Mammary epithelial cell (primary cell): ENCODE measurements at regions of chr9 and their contacts with region 1.

Region 1: DNA sequence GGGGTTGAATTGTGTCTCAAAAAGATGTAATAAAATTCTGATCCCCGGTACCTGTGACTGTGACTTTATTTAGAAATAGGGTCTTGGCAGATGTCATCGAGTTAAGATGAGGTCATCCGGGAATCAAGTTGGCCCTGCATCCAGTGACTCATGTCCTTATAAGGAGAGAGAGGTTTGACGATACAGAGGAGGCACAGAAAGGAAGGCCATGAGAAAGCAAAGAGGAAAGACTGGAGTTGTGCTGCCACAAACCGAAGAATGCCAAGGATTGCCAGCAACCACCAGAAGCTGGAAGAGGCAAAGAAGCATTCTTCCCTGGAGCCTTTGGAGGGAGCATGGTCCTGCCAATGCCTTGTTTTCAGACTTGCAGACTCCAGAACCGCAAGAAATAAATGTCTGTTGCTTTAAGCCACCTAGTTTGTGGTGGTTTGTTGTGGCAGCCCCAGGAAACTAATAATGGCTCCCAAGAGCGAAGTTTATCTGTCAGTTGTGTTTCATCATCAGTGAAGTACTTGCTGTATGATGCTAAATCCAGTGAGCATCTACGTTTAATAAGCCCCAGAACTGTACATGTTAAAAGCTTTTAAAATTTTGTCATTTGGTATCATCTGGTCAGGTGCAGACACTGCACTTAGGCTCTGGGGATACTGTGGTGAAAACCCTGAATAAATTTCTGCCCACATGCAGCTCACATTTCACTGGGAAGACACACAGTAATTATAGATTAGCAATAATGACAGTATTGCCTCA is 114.8 kb downstream of the TLE4 start:
- DNase-seq: peak; percentile 88
- H3K4me3 ChIP-seq: peak overlapping the region in 1 of 3 experiments; percentile 19
- H3K27ac ChIP-seq: peak overlapping the region; percentile 66
- H3K4me1 ChIP-seq: peaks cover 38% of the 10 kb centered on the region
- H3K27me3 ChIP-seq: no peaks in the 10 kb centered on the region
- CTCF ChIP-seq: peak in 1 of 2 donors; percentile 6

Region 2: DNA sequence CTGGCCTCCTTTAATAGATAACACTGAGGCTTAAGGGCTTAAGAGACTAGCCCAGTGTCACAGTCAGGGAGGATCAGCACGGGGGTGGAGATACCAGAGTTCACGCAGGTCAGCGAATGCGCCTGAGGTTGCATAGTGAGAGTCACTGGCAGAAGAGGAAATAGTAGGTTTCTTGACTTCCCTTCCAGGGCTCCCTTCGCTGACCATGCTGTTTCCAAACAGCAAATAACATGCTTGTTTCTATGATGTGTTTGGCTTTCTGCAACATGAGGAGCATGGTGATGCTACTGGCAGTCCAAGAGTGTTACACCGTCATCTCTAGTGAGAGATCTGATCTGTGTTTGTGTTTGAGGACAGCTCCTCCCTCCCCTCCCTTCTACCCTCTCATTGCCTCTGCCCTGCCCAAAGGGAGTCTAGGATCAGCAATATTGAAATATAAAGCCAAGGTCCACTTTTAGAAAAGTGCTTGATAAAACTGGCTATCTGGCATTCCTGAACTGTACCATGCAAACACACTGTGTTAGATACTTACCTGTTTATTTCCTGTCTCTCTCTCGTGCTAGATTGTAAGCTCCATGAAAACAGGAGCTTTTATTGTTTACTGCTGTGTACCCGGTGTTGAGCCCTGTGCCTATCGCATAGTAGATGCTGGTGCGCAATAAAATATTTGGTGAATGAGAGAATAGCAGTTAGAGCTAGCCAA is 102.5 kb before region 1 on chr9:
- CTCF ChIA-PET with region 1: no interaction called
- dilution Hi-C with region 1: no loop called
- in situ Hi-C with region 1: loop called in 1 of 2 experiments (anchors 25 kb)
- intact Hi-C with region 1: no loop called
- DNase-seq: no peak
- H3K4me3 ChIP-seq: no peak overlapping the region
- H3K27ac ChIP-seq: no peak overlapping the region
- H3K4me1 ChIP-seq: peaks cover 13% of the 10 kb centered on the region
- H3K27me3 ChIP-seq: no peaks in the 10 kb centered on the region
- CTCF ChIP-seq: no peak

Region 3: GRCh38 chr9:79610791-79611614 is 75.6 kb before region 1 on chr9:
- CTCF ChIA-PET with region 1: no interaction called
- dilution Hi-C with region 1: loop called (anchors 5 kb)
- in situ Hi-C with region 1: no loop called
- intact Hi-C with region 1: no loop called
- DNase-seq: peak; percentile 79
- H3K4me3 ChIP-seq: no peak overlapping the region
- H3K27ac ChIP-seq: no peak overlapping the region
- H3K4me1 ChIP-seq: peaks cover 7% of the 10 kb centered on the region
- H3K27me3 ChIP-seq: no peaks in the 10 kb centered on the region
- CTCF ChIP-seq: no peak

Region 4: DNA sequence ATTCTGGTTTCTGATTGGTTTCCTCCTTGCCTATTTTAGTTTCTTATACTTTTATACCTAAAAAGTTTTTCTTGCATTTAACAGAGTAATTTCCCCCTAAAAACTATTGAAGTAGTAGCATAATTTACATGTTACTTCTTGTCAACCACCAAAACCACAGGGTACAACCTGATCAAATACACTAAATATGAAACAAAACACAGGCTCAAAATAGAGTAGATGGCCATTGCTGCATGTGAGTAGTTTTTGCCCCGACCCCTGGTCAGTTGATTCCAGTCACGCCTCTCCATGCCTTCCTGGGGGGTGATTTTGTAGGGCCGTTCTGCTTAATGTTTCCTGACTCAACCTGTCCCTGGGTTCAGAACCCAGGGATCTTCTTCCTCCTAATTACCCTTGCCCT is 12.9 kb before region 1 on chr9:
- CTCF ChIA-PET with region 1: no interaction called
- dilution Hi-C with region 1: no loop called
- in situ Hi-C with region 1: no loop called
- intact Hi-C with region 1: loop called (anchors 1 kb)
- DNase-seq: no peak
- H3K4me3 ChIP-seq: no peak overlapping the region
- H3K27ac ChIP-seq: no peak overlapping the region
- H3K4me1 ChIP-seq: peaks cover 38% of the 10 kb centered on the region
- H3K27me3 ChIP-seq: no peaks in the 10 kb centered on the region
- CTCF ChIP-seq: no peak